ENCODE measurements at regions of chr3 and their contacts with region 1.

Region 1: GRCh38 chr3:195442573-195443390 is at the start of gene ACAP2:
- DNase-seq: peak; percentile 100
- ATAC-seq: peak; percentile 91 to 93
- H3K4me3 ChIP-seq: peak within 1 kb of the TSS; percentile 71 to 95 (median 91)
- H3K27ac ChIP-seq: peak within 1 kb of the TSS; percentile 93 to 98 (median 94)
- H3K4me1 ChIP-seq: peaks cover 16 to 25% of the 10 kb centered on the region in 2 donors
- H3K27me3 ChIP-seq: no peaks in the 10 kb centered on the region
- CTCF ChIP-seq: no peak
- POLR2A ChIP-seq: peak; percentile 96 to 97
- total RNA-seq, gene ACAP2: 13.2 to 27.6 (median 15.5) TPM

Region 2: GRCh38 chr3:194583604-194584318 is 859.0 kb before region 1 on chr3:
- in situ Hi-C with region 1: no loop called
- intact Hi-C with region 1: loop called (anchors 10 kb)
- DNase-seq: peak; percentile 84 to 90
- ATAC-seq: peak; percentile 96 to 97
- H3K4me3 ChIP-seq: peak overlapping the region; percentile 64 to 79 (median 71)
- H3K27ac ChIP-seq: peak overlapping the region; percentile 77 to 89 (median 82)
- H3K4me1 ChIP-seq: peaks cover 0 to 10% of the 10 kb centered on the region in 2 donors
- H3K27me3 ChIP-seq: no peaks in the 10 kb centered on the region
- CTCF ChIP-seq: no peak
- POLR2A ChIP-seq: peak; percentile 84 to 90

Region 3: DNA sequence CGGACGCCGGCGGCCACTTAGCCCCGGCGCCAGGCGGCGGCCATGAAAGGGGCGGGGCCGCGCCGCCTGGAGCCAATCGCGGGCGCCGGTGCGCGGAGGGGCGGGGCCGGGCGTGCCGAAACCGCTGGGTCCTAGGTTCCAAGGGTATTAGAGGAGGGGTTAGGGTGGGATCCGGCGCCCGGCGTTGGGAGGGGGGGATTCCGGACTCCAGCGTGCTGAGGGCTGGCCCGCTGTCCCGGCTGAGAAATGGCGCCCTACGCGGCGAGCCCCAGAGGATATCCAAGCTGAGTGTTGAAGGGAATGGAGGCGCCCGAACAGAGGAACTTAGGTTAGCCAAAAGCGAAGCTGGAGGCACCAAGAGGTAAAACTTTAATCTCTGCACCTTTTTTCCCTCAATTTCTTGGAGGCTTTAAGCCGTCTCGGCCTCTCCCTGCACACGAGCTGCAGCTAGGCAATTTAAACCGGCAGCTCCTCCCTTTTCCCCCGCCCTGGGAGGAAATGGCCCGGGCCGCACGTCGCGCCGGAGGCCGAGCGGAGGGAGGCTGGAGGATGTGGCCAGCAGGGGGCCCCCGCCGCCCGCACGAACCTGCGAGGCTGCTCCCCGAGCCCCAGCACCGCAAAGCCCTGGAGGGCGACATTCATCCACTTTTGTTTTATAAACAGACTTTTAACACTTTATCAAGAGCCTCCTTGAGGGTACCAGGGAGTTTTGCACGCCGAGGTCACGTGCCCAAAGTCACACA is 171.5 kb before region 1 on chr3 and contains the start of gene XXYLT1:
- in situ Hi-C with region 1: no loop called
- intact Hi-C with region 1: loop called (anchors 2 kb)
- DNase-seq: peak; percentile 70 to 81
- ATAC-seq: peak; percentile 93 to 96
- H3K4me3 ChIP-seq: peak within 1 kb of the TSS; percentile 73 to 96 (median 85)
- H3K27ac ChIP-seq: peak within 1 kb of the TSS; percentile 78 to 95 (median 87)
- H3K4me1 ChIP-seq: peaks cover 15 to 19% of the 10 kb centered on the region in 2 donors
- H3K27me3 ChIP-seq: no peaks in the 10 kb centered on the region
- CTCF ChIP-seq: peak; percentile 84 to 94 (median 90)
- POLR2A ChIP-seq: no peak
- total RNA-seq, gene XXYLT1: 0.87 to 3.1 (median 1.3) TPM

Measured in gastrocnemius medialis (tissue), 4 donors.